ENCODE measurements at regions of chr19 and their contacts with region 1.

Region 1: DNA sequence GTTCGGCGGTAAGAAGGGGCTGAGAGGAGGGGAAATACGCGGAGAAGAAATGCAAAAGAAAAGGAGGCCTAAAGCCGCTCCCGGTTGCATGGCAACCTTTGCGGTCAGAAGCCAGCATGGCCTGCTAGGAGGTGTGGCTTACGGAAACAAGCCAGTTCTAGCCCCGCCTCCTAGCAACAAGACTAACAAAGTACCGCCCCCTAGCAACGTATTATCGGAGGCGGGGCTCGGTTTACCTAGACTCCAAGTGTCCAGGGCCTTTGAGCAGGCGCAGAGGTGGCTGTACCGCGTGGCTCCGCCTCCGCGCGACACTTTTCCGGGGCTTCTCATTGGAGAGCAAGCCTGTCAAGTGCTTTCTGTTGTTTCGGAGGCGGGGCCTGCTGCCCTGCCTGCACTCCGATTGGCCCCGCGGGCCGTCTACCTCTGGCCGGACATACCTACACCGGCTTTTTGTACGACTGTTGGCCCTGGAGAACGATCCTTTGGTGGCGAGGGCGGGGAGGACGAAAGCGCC is 337 bp upstream of the CYTH2 start:
- DNase-seq: peak; percentile 100
- H3K4me3 Mint-ChIP-seq: peak overlapping the region; percentile 90
- H3K27ac Mint-ChIP-seq: peak overlapping the region; percentile 88
- H3K4me1 Mint-ChIP-seq: peaks cover 12% of the 10 kb centered on the region
- H3K27me3 Mint-ChIP-seq: no peaks in the 10 kb centered on the region

Region 2: DNA sequence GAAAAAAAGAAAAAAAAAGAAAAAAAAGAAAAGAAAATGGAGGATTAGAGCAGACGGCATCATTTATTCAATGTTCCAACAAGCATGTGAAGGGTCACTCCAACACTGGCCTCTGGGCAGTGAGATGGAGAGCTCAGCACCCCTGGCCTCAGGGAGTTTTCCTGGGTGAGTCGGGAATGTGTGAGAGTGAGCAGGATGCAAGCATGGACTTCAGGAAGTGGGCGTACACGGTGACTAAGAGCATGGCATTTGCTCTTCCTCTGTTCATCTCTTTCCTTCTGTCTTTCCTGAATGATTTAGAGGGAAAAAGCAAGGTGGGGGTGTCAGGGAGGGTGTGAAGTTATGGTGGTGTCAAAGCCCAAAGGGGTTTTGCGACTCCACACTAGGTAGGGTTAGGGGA is 424.3 kb before region 1 on chr19:
- intact Hi-C with region 1: no loop called
- DNase-seq: no peak
- H3K4me3 Mint-ChIP-seq: no peak overlapping the region
- H3K27ac Mint-ChIP-seq: no peak overlapping the region
- H3K4me1 Mint-ChIP-seq: no peaks in the 10 kb centered on the region
- H3K27me3 Mint-ChIP-seq: no peaks in the 10 kb centered on the region

Region 3: GRCh38 chr19:48170038-48170812 is 298.6 kb before region 1 on chr19 and contains the starts of genes LIG1 and ZSWIM9:
- intact Hi-C with region 1: loop called (anchors 1 kb)
- DNase-seq: peak; percentile 89
- H3K4me3 Mint-ChIP-seq: peak within 1 kb of the TSS; percentile 97
- H3K27ac Mint-ChIP-seq: peak within 1 kb of the TSS; percentile 100
- H3K4me1 Mint-ChIP-seq: peaks cover 33% of the 10 kb centered on the region
- H3K27me3 Mint-ChIP-seq: peaks cover 3% of the 10 kb centered on the region
- total RNA-seq, gene LIG1: 133 and 140 TPM in 2 replicates
- total RNA-seq, gene ZSWIM9: 8.4 and 9.5 TPM in 2 replicates

Region 4: GRCh38 chr19:48419158-48419920 is 49.5 kb before region 1 on chr19:
- intact Hi-C with region 1: loop called (anchors 2 kb)
- DNase-seq: peak; percentile 66
- H3K4me3 Mint-ChIP-seq: peak overlapping the region; percentile 75
- H3K27ac Mint-ChIP-seq: peak overlapping the region; percentile 65
- H3K4me1 Mint-ChIP-seq: peaks cover 26% of the 10 kb centered on the region
- H3K27me3 Mint-ChIP-seq: peaks cover 18% of the 10 kb centered on the region

Region 5: DNA sequence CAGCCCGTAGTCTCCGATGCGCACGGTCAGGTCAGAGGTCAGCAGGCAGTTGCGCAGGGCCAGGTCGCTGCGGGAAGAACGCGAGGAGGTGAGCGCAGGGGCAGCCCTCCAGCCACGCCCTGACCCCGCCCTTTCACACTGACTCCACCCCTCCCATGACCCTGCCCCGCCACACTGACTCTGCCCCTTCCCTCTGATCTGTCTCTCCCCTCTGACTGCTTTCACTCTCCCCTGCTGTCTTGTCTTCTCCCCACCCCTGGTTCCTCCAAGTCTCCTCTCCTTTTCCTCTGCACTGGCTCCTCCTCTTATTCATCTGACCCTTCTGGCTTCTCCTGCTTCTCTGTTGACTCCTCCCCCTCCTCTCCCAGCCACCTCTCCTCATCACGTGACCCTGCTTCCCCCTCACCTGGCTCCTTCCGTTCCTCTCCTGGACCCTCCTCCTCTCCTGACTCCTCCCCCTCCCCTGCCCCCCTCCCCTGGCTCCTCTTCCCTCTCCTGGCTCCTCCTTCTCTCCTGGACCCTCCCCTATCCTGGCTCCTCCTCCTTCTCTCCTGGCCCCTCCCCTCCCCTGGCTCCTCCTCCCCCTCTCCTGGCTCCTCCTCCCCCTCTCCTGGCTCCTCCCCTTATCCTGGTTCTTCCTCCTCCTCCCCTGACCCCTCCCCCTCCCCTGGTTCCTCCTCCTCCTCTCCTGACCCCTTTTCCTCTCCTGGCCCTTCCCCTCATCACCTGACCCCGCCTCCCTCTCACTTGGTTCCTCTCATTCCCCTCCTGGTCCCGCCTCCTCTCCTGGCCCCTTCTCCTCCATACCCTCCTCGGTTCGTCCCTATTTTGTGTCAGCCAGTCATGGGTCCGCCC is 32.9 kb after region 1 on chr19:
- intact Hi-C with region 1: loop called (anchors 2 kb)
- DNase-seq: peak; percentile 63
- H3K4me3 Mint-ChIP-seq: peak overlapping the region; percentile 54
- H3K27ac Mint-ChIP-seq: peak overlapping the region; percentile 62
- H3K4me1 Mint-ChIP-seq: peaks cover 6% of the 10 kb centered on the region
- H3K27me3 Mint-ChIP-seq: peaks cover 5% of the 10 kb centered on the region

Region 6: DNA sequence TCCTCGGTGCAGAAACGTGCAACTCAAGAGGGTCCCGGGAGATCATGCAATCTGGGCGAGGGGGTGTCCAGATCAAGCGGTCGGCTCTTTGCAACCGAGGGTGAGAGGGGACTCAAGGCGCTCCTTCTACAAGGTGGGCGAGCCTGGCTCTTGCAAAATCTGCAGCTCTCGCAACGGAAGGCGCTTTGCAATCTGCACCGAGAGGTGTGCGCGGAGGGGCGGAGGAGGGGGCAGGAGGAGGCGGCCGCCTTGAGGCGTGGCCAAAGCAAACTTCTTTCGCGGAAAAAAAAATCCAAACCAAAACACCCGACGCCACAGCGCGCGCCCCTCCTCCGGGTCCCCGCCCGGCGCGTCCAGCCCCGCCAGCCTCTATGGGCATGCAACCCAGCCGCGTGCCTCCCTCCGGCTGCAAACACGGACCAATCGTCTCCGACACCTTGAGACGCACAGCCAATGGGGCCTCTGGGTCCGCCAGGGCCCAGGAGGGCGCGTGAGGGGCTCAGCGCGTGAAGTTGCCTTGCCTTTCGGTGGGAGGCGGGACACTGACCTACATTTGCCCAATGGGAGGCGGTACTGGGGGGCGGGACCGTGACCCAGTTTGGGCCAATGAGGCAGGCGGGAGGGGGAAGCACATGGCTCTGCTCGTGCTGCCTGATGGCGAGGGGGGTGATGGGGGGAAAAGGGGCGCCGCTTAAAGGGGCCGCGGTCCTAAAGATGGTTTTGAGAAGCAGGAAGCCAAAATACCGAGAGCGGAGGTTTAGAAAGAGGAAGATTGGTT is 168.5 kb after region 1 on chr19 and contains the start of gene DBP:
- intact Hi-C with region 1: loop called (anchors 1 kb)
- DNase-seq: peak; percentile 98
- H3K4me3 Mint-ChIP-seq: peak within 1 kb of the TSS; percentile 97
- H3K27ac Mint-ChIP-seq: peak within 1 kb of the TSS; percentile 100
- H3K4me1 Mint-ChIP-seq: peaks cover 29% of the 10 kb centered on the region
- H3K27me3 Mint-ChIP-seq: peaks cover 4% of the 10 kb centered on the region
- total RNA-seq, gene DBP: 8.5 and 9.1 TPM in 2 replicates

Region 7: DNA sequence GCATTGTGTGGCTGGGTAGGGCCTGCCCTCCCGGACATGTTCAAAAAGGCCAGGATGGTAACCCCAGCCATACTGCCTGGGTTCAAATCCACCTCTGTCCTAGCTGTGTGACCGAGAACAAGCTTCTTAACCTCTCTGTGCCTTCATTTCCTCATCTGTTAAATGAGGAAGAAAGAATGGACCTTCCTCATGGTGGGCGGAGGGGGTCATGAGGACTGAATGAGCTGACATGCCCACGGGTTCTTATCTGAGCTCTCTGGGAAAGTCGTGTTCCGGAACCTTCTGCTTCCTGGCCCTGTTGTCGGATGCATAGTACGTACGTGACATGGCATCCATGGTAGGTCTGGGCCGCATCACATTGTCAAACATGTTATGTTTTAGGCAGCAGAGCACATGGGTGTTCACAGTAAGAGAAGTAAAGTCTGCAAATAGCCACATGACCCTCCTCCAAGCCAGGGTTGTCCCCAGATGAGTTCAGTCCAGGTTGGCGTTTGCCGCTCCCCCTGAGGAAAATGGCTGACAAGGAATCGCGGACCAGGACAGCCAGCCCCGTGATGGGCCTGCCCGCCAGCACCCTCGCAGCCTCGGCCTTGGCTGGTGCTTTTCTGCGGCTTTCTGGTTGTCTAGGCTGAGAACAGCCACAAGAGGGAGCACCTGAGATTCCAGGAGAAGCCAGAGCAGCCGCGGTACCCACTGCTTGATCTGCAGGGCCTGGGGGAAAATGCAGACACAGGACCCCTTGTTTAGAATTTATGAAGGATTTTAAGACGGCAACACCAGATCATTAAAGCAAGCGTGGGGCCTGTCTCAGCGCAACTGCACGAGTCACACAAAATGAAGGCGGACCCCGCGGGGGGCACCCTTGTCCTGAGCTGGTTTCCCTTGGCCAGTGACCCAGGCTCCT is 206.3 kb after region 1 on chr19:
- intact Hi-C with region 1: no loop called
- DNase-seq: peak; percentile 69
- H3K4me3 Mint-ChIP-seq: no peak overlapping the region
- H3K27ac Mint-ChIP-seq: no peak overlapping the region
- H3K4me1 Mint-ChIP-seq: peaks cover 8% of the 10 kb centered on the region
- H3K27me3 Mint-ChIP-seq: peaks cover 4% of the 10 kb centered on the region

Region 8: DNA sequence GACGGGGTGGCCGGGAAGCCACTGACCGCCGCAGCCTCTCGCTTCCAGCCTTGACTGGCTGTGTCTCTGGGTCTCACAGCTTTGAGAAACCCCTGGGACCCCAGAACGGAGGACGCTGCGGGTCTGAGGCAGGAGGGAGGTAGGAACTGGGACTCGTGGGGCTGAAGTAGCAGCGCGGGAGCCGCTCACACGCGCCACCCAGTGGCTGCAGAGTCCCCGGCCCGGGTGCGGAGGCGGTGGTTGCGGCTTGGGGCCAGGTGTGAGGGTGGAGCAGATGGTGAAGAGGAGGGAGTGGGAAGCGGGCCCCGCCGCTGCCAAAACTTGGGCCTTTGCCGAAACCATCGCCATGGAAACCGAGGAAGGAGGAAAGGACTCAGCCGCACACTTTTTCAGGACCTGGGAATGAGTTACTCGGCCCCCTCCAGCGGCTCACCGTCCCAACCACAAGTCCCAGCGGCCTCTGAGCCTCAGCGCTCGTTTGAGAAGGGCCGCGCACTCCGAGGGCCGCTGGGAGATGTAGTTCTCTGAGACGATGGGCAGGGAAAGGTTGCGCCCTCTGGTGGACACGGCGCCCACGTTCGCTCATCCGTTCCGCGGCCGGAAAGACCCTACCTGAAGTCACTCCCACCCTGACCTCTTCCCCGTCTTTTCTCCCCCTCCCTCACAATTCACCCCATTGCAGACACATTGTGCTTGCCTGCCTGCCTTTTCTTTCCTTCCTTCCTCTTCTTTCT is 974.7 kb after region 1 on chr19:
- intact Hi-C with region 1: loop called (anchors 2 kb)
- DNase-seq: peak; percentile 90
- H3K4me3 Mint-ChIP-seq: peak overlapping the region; percentile 82
- H3K27ac Mint-ChIP-seq: peak overlapping the region; percentile 88
- H3K4me1 Mint-ChIP-seq: peaks cover 42% of the 10 kb centered on the region
- H3K27me3 Mint-ChIP-seq: peaks cover 37% of the 10 kb centered on the region